ENCODE measurements at regions of chr13 and their contacts with region 1.

Region 1: DNA sequence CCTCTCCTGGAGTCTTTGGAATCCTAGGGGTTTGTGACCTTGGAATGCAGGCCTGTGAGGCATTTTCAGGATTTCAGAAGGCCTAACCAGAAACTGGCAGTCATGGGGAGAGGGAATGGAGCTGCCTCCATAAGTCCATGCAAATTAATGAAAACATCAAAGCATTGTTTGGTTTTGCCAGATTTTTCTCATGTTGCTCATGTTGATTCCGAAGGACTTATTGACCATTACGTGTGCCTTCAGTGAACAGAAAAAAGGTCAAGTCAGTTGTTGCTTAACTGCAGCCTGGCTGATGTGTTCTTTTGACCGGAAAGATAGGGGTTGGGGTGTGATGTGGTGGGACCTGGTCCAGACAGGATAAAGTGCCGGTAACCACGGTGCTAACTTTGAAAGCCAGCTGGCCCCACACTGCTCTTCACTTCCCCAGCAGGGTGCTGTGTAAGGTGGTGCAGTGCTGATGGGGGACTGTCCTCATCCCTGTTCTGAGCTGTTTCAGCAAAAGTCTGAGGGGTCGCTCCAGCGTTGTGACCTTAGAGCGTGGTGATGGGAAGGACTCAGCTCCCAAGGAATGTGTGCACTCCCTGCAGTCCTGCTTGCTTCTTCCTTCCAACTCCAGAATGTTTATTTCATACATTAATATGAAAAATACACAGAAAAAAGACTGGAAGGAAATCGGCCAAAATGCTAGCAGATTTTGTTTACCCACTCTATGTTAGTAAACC is 3.5 kb downstream of the RNF113B start:
- DNase-seq: no peak
- H3K4me3 Mint-ChIP-seq: no peak overlapping the region
- H3K27ac Mint-ChIP-seq: no peak overlapping the region
- H3K4me1 Mint-ChIP-seq: peaks cover 25% of the 10 kb centered on the region
- H3K27me3 Mint-ChIP-seq: no peaks in the 10 kb centered on the region
- CTCF ChIP-seq: no peak

Region 2: DNA sequence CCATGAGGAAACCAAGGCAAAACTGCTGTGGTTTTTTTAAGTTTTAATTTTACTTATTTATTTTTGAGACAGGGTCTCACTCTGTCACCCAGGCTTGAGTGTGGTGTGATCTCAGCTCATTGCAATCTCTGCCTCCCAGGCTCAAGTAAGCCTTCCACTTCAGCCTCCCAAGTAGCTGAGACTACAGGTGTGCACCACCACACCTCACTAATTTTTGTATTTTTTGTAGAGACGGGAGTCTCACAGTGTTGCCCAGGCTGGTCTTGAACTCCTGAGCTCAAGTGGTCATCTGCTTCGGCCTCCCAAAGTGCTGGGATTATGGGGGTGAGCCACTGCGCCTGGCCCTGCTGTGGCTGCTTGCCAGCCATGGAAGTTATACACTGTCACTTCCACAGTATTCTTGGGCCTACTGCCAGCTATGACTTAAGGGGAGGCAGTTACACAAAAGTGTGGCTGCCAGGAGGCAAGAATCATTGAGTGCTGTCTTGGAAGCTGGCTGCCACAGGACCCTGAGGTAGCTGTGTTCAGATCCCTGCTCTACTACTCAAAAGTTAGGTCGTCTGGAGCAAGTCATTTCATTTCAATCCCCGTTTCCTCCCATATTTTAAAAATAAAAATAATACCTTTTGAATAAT is 18.0 kb before region 1 on chr13:
- CTCF ChIA-PET with region 1: interaction called, 4 read pairs
- intact Hi-C with region 1: loop called (anchors 2 kb)
- DNase-seq: no peak
- H3K4me3 Mint-ChIP-seq: no peak overlapping the region
- H3K27ac Mint-ChIP-seq: no peak overlapping the region
- H3K4me1 Mint-ChIP-seq: peaks cover 7% of the 10 kb centered on the region
- H3K27me3 Mint-ChIP-seq: no peaks in the 10 kb centered on the region
- CTCF ChIP-seq: no peak

Measured in Calu3 (cell line).